Activated T-helper 1 cell treated with anti-CD3 and anti-CD28 coated beads, Interleukin-12 subunit alpha, Interleukin-12 subunit beta, Interleukin-2, Interleukin-4 antibody, amounts not matched to agents 30 ng/mL and 10 ng/mL and 1 ng/mL, durations not matched to agents 14 hours and 24 hours and 36 hours (primary cell): ENCODE measurements at regions of chr2 and their contacts with region 1.

Region 1: DNA sequence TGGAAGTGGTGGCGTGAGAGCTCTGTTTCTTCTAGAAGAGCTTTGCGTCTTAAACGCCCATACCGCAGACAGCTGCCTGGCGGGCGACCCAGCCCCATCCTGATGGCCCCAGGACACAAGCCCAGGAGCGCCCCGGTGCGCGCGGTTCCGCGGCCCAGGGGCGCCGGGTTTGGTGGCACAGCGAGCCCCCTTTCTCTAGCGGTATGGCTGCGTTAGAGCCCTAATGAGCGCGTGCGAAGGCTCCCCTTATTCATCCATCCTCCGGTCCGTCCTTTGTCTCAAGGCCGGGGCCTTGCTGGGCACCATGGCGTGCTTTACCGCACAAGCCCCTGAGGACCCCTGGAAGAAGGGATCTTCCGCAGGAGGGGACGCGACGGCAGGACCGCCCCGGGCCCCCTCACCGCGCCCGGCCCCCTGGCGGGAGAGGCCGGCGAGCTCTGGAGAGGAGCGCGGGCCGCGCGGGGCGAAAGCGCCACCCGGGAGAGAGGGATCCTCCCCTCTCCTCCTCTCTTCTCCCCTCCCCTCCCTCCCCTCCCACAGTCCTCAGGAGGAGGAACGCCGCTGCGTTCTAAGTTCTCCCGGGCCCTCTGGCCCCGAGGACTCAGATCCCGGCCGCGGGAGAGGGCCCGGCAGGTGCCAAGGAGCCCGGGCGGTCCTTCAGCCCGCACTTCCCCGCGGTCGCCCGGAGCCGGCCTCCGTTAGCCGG is 626 bp upstream of the SLC1A4 start:
- DNase-seq: peak; percentile 75
- H3K4me3 Mint-ChIP-seq: peak overlapping the region; percentile 88
- H3K27ac Mint-ChIP-seq: peak overlapping the region; percentile 92
- H3K4me1 Mint-ChIP-seq: peaks cover 79% of the 10 kb centered on the region
- H3K27me3 Mint-ChIP-seq: peaks cover 11% of the 10 kb centered on the region

Region 2: GRCh38 chr2:64114063-64114911 is 874.3 kb before region 1 on chr2:
- intact Hi-C with region 1: loop called (anchors 10 kb)
- DNase-seq: no peak
- H3K4me3 Mint-ChIP-seq: peak overlapping the region; percentile 17
- H3K27ac Mint-ChIP-seq: peak overlapping the region; percentile 59
- H3K4me1 Mint-ChIP-seq: peaks cover 73% of the 10 kb centered on the region
- H3K27me3 Mint-ChIP-seq: no peaks in the 10 kb centered on the region

Region 3: DNA sequence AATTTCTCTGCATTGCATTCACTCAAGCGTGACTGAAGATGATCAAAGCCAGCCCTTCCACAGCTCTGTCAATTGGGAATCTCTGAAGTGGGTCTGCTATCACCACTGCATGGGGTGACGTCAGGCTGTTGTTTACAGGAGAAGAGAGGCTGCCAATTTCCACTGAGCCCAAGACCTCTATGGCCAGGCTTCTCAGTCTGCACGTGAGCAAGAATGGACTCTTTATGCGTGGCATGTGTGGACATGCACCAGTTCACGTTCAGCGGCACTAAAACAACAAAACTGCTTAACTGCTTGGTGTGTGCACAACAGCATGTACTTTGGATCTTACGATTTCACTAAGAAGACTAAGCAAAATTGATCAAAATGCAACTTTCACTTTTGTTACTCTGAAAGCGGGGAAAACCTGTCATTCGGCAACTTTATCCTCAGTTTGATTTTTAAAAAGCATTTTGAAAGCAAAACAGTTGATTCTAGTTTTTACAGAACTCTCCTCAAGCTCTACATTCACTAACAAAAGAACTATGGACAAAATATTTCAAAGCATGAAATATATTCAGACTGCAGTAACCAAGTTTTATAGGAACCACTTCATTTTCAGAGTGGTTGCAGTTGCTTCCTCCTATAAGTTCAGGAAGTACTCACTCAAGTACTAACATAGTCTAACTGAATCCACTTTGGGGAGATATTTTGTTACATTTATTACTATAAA is 257.9 kb before region 1 on chr2:
- intact Hi-C with region 1: loop called (anchors 10 kb)
- DNase-seq: peak; percentile 35
- H3K4me3 Mint-ChIP-seq: peak overlapping the region; percentile 85
- H3K27ac Mint-ChIP-seq: peak overlapping the region; percentile 89
- H3K4me1 Mint-ChIP-seq: peaks cover 77% of the 10 kb centered on the region
- H3K27me3 Mint-ChIP-seq: no peaks in the 10 kb centered on the region

Region 4: DNA sequence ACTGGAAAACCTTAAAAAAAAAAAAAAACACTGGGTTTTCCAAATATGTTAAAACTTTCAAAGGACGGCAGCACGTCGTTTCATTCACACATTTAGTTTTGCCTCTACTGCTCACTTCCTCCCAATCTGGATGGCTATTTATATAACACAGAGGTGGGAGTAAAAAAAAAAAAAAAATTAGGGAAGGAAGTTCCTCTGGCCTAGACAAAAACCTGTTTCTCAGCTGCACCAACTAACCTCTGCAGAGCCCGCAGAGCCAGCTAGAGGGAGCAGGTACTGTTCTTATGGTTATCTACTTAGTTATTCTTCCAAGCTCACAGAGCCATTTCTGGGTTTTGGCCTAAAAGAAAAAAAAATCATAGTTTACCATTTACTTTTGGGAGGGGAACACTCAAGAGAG is 28.8 kb after region 1 on chr2:
- intact Hi-C with region 1: no loop called
- DNase-seq: no peak
- H3K4me3 Mint-ChIP-seq: no peak overlapping the region
- H3K27ac Mint-ChIP-seq: no peak overlapping the region
- H3K4me1 Mint-ChIP-seq: peaks cover 10% of the 10 kb centered on the region
- H3K27me3 Mint-ChIP-seq: no peaks in the 10 kb centered on the region

Region 5: DNA sequence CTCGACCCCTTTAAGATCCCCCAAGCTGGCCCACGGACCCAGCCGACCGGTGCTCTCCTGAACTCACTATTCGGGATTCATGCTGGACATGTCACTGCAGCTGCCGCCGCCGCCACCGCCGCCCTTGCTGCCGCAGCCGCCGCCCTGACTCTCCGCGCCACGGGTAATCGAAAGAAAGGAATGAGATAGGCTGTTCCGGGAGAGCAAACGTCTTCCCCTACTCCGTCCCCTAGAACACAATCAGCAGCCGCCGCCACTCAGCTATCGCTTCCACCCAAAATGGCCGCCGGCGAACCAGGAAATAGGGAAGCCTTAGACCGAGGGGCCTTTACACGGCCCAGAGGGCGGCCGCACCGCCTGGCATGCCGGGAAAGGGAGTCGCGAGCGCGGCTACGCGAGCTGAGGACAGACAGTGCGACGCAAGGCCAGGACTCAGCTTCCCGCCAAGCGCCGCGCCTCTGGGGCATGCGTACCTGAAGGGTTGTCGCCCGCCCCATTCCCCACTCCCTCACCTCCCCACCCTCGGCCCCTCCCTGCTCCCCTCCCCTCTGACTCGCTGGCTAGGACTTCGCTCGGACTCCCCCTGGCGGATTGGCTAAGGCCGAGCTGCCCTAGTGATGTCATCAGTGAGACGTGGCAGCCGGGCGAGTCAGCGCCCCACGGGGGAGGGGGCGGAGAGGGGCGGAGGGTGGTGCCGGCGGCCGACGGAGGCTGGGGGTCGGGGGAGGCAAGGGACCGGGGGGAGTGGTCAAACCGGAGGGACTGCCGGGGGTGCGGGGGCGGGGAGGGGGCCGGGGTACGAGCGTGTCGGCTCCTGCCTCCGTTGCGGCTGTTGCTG is 141.5 kb after region 1 on chr2 and contains the start of gene RAB1A:
- intact Hi-C with region 1: loop called (anchors 1 kb)
- DNase-seq: peak; percentile 98
- H3K4me3 Mint-ChIP-seq: peak within 1 kb of the TSS; percentile 98
- H3K27ac Mint-ChIP-seq: peak within 1 kb of the TSS; percentile 99
- H3K4me1 Mint-ChIP-seq: peaks cover 30% of the 10 kb centered on the region
- H3K27me3 Mint-ChIP-seq: peaks cover 16% of the 10 kb centered on the region
- total RNA-seq, gene RAB1A: 73.4 and 81.6 TPM in 2 replicates

Region 6: GRCh38 chr2:65382776-65383357 is 394.3 kb after region 1 on chr2:
- intact Hi-C with region 1: loop called (anchors 10 kb)
- DNase-seq: peak; percentile 63
- H3K4me3 Mint-ChIP-seq: peak overlapping the region; percentile 56
- H3K27ac Mint-ChIP-seq: peak overlapping the region; percentile 62
- H3K4me1 Mint-ChIP-seq: peaks cover 67% of the 10 kb centered on the region
- H3K27me3 Mint-ChIP-seq: peaks cover 7% of the 10 kb centered on the region